ENCODE measurements at regions of chr1 and their contacts with region 1.

Region 1: GRCh38 chr1:214603819-214604252 is 841 bp downstream of the CENPF start:
- DNase-seq: no peak
- ATAC-seq: peak; percentile 20
- H3K4me3 ChIP-seq: peak overlapping the region; percentile 93
- H3K27ac ChIP-seq: peak overlapping the region; percentile 64
- H3K4me1 ChIP-seq: peaks cover 16% of the 10 kb centered on the region
- H3K27me3 ChIP-seq: no peaks in the 10 kb centered on the region
- CTCF ChIP-seq: no peak

Region 2: DNA sequence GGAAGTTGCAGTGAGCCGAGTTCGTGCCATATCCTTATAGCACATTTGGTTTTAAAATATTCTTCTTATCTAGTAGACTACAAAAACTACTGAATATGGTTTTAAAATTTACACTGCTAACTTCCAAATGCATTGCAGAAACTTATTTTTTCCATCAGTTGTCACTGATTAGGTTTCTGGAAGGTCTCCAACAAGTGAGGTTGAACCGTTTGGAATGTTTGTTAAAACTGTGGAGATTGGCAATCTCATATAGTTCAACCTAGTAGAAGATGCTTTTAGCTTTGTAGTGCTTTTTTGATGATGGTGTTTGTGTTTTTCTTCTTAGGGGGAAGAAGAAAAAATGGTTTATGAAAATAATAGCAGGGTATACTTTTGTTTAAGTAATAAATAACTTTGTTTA is 12.0 kb after region 1 on chr1:
- CTCF ChIA-PET with region 1: no interaction called
- POLR2A ChIA-PET with region 1: no interaction called
- intact Hi-C with region 1: loop called (anchors 1 kb)
- DNase-seq: peak; percentile 25
- ATAC-seq: no peak
- H3K4me3 ChIP-seq: no peak overlapping the region
- H3K27ac ChIP-seq: no peak overlapping the region
- H3K4me1 ChIP-seq: peaks cover 31% of the 10 kb centered on the region
- H3K27me3 ChIP-seq: no peaks in the 10 kb centered on the region
- CTCF ChIP-seq: no peak